ENCODE measurements at regions of chr16 and their contacts with region 1.

Region 1: GRCh38 chr16:84970447-84971127 is 40.7 kb downstream of the ZDHHC7 start:
- DNase-seq: peak; percentile 81
- ATAC-seq: peak; percentile 78 to 80

Region 2: GRCh38 chr16:84672276-84673202 is 298.0 kb before region 1 on chr16:
- intact Hi-C with region 1: loop called in 1 of 2 experiments (anchors 5 kb)
- DNase-seq: peak; percentile 81
- ATAC-seq: peak; percentile 86 to 88

Region 3: DNA sequence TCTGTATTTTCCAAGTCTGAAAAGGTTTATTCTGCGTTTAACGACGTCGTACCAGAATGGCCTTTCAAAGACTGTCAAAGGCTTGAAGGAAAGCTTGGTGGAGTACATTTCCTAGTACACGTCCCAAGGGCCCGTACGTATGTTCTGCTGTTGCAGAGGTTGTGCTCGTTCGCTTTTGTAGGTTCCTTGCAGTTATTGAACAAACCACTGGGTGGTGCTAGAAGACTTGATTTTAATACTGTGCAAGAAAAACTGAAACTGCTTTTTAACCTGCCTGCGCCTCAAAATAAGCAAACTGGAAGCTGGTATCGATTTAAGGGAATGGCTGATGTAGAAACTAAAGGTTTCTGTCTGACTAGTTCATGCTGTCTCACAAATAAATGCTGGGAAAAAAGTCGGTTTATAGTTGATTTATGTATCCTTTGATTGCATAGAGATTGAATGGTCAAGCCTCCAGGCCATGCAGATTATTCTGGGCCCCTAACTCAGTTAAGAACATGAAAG is 216.2 kb before region 1 on chr16:
- intact Hi-C with region 1: loop called (anchors 2 to 5 kb)
- DNase-seq: no peak
- ATAC-seq: peak; percentile 81 to 82

Region 4: DNA sequence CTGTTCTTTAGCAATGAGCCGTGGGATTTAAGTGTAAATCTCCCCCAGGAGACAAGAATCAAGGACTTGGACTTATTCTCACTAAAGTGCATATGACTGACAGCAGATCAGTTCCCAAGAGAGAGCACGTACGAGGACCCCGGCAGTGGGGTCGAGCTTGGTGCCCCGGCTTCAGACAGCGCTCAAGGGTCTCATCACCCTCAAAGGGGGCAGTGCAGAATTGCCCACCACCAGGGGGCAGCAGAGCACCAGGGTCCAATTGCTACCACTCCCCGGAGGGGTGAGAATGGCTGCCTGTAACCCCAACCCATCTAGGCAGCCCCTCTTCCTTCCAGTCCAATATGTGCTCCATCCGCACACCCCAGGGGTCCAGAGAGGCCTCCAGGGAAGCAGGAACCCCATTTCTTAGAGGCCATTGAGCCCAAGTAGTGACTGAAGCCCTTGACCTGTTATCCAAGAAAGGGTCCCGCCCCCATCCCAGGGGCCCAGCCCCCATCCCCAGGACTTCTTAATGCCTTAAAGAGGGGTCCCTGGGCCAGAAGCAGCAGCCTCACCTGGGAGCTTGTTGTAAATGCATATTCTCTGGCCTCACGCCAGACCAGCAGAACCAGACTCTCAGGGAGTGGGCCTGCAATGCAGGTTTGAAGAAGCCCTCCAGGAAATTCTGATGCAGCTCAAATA is 45.4 kb before region 1 on chr16:
- intact Hi-C with region 1: loop called in 1 of 2 experiments (anchors 5 kb)
- DNase-seq: peak; percentile 66
- ATAC-seq: peak in 1 of 2 donors; percentile 3

Region 5: DNA sequence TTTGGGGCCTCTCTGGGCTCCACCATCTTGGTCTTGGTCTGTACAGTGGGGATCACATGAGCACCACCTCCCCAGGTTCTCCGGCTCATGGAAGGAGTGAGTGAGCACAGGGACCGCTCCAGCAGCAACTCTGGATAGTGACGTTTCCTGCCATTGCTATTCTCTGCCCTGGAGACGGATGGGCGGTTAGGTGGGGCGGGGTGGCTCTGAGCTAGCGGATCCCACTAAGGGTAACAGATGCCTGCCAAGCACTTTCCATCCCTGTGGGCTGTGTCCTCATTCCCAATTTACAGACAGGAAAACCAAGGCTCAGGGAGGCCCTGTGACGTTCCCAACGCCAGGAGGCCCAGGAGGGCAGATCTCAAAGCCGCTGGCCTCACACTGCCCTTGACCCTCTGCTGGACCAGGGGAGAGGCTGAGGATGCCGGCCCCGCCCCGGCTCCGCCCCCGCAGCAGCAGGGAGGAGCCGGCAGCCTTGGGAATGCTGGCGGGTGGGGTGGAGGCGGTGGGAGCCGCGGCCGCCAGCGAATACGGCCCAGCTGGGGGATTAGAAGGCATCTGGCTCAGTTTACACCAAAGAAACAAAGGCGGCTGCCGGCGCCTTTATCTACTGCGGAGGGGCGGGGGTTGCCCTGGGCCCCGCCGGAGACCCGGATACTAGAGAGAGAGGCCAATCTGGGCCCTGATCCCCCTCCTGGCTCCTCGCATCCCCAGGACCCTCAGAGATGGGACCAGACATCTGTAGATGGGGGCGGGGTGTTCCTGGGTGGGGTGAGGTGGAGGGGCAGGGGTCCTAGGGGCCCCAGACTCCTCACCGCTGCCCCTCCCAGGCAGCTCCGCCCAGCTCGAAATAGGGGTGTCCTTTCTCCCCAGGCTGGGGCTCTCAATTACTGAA is 264.0 kb after region 1 on chr16:
- intact Hi-C with region 1: no loop called
- DNase-seq: peak; percentile 82
- ATAC-seq: peak; percentile 68 to 79

Measured in left cardiac atrium (tissue), 4 donors.